Dendritic cell treated with granulocyte-macrophage colony-stimulating factor and Interleukin-4, amounts not matched to agents 40 ng/mL and 50 ng/mL, for 4 days (primary cell): ENCODE measurements at regions of chr3 and their contacts with region 1.

Region 1: GRCh38 chr3:31377045-31377642 is 155.6 kb upstream of the STT3B start:
- H3K4me3 Mint-ChIP-seq: no peak overlapping the region
- H3K27ac Mint-ChIP-seq: no peak overlapping the region
- H3K4me1 Mint-ChIP-seq: peaks cover 7% of the 10 kb centered on the region
- H3K27me3 Mint-ChIP-seq: no peaks in the 10 kb centered on the region

Region 2: GRCh38 chr3:31157046-31157693 is 220.0 kb before region 1 on chr3:
- intact Hi-C with region 1: loop called (anchors 10 kb)
- H3K4me3 Mint-ChIP-seq: peak overlapping the region; percentile 55
- H3K27ac Mint-ChIP-seq: peak overlapping the region; percentile 26
- H3K4me1 Mint-ChIP-seq: peaks cover 9% of the 10 kb centered on the region
- H3K27me3 Mint-ChIP-seq: no peaks in the 10 kb centered on the region

Region 3: GRCh38 chr3:31432897-31433678 is 55.9 kb after region 1 on chr3:
- intact Hi-C with region 1: no loop called
- H3K4me3 Mint-ChIP-seq: no peak overlapping the region
- H3K27ac Mint-ChIP-seq: no peak overlapping the region
- H3K4me1 Mint-ChIP-seq: no peaks in the 10 kb centered on the region
- H3K27me3 Mint-ChIP-seq: no peaks in the 10 kb centered on the region

Region 4: DNA sequence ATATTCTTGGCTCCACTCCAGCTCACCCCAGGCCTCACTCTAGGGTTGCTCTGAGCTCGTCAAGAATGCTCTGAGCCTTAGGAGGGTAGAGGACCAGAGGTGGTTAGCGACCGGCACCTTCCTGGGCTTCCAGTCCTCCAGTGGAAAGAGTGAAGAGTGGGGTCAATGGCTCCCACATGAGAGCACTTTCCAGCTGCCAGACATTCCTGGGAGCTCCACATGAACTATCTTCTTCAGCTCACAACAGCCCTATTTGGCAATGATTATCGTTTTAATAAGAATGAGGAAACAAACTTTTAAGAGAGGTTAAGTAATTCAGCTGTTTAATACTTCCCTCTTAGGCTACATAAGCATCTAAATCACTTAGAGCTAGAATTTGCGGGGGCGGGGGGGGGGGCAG is 294.8 kb after region 1 on chr3:
- intact Hi-C with region 1: no loop called
- H3K4me3 Mint-ChIP-seq: peak overlapping the region; percentile 23
- H3K27ac Mint-ChIP-seq: peak overlapping the region; percentile 90
- H3K4me1 Mint-ChIP-seq: peaks cover 63% of the 10 kb centered on the region
- H3K27me3 Mint-ChIP-seq: peaks cover 4% of the 10 kb centered on the region